ENCODE measurements at regions of chr1 and their contacts with region 1.

Region 1: DNA sequence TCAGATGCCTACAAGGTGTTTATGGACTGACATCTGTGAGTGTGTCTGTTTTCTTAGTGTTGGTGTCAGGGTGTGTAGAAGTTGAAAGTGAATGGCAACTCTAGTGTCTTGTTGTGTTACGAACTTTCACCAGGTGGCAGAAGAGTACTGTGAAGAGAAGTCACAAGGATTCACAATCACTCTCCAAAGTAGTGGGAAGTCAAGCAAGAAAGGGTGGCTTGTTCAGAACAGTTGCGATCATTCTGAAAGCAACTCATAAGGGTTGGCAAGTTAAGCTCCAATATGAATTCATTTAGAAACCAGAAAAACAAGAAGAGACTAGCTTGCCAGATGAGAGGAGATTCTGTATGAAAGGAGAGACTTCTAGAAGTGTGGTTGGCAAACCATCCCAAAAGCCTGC is 86.1 kb downstream of the FASLG start:
- DNase-seq: peak; percentile 91
- H3K4me3 Mint-ChIP-seq: peak overlapping the region; percentile 42
- H3K27ac Mint-ChIP-seq: peak overlapping the region; percentile 86
- H3K4me1 Mint-ChIP-seq: peaks cover 42% of the 10 kb centered on the region
- H3K27me3 Mint-ChIP-seq: no peaks in the 10 kb centered on the region
- CTCF ChIP-seq: peak; percentile 85

Region 2: GRCh38 chr1:172778456-172779455 is 33.7 kb after region 1 on chr1:
- CTCF ChIA-PET with region 1: interaction called, 13 read pairs
- POLR2A ChIA-PET with region 1: interaction called, 4 read pairs
- intact Hi-C with region 1: no loop called
- DNase-seq: peak; percentile 14
- H3K4me3 Mint-ChIP-seq: no peak overlapping the region
- H3K27ac Mint-ChIP-seq: no peak overlapping the region
- H3K4me1 Mint-ChIP-seq: no peaks in the 10 kb centered on the region
- H3K27me3 Mint-ChIP-seq: no peaks in the 10 kb centered on the region
- CTCF ChIP-seq: peak; percentile 10

Region 3: GRCh38 chr1:172976222-172977041 is 231.4 kb after region 1 on chr1:
- CTCF ChIA-PET with region 1: interaction called, 9 read pairs
- POLR2A ChIA-PET with region 1: interaction called, 4 read pairs
- intact Hi-C with region 1: loop called (anchors 1 kb)
- DNase-seq: peak; percentile 98
- H3K4me3 Mint-ChIP-seq: no peak overlapping the region
- H3K27ac Mint-ChIP-seq: peak overlapping the region; percentile 88
- H3K4me1 Mint-ChIP-seq: peaks cover 47% of the 10 kb centered on the region
- H3K27me3 Mint-ChIP-seq: no peaks in the 10 kb centered on the region
- CTCF ChIP-seq: no peak

Region 4: GRCh38 chr1:172990598-172991215 is 245.7 kb after region 1 on chr1:
- CTCF ChIA-PET with region 1: no interaction called
- POLR2A ChIA-PET with region 1: no interaction called
- intact Hi-C with region 1: no loop called
- DNase-seq: no peak
- H3K4me3 Mint-ChIP-seq: no peak overlapping the region
- H3K27ac Mint-ChIP-seq: no peak overlapping the region
- H3K4me1 Mint-ChIP-seq: peaks cover 10% of the 10 kb centered on the region
- H3K27me3 Mint-ChIP-seq: no peaks in the 10 kb centered on the region
- CTCF ChIP-seq: no peak

Region 5: DNA sequence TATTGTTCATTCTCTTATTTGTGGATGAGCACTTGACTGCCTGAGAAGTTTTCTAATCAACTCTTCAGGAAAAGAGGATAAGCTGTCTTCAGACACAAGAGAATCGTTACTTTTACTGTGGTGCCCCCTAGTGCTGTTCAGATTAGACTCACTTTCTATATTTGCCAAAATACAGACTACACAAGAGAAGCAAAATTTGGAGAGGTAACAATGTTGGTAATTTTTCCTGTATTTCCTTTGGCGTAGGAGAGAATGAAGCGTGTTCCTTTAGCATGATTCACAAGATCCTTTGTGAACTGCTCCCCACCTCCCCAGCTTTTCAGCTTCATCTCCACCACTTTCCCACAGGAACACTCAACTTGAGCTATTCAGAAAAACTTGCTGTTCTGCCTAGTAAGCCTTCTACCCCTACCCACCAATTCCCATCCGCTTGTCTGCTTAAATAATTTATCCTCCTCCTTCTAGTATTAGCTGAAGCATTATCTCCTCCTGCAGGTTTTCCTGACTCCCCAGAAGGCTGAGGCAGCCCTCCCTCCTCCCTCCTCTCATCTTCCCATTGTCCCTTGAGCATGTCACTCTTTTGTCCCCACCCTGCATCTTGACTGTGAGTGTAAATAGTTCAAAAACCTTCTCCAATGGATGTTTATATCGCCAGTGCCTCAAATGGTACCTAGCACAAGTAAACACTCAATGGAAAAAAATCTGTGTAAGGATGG is 457.6 kb after region 1 on chr1:
- CTCF ChIA-PET with region 1: interaction called, 590 read pairs
- POLR2A ChIA-PET with region 1: interaction called, 35 read pairs
- intact Hi-C with region 1: loop called (anchors 1 kb)
- DNase-seq: peak; percentile 83
- H3K4me3 Mint-ChIP-seq: no peak overlapping the region
- H3K27ac Mint-ChIP-seq: no peak overlapping the region
- H3K4me1 Mint-ChIP-seq: peaks cover 25% of the 10 kb centered on the region
- H3K27me3 Mint-ChIP-seq: no peaks in the 10 kb centered on the region
- CTCF ChIP-seq: peak; percentile 92

Region 6: DNA sequence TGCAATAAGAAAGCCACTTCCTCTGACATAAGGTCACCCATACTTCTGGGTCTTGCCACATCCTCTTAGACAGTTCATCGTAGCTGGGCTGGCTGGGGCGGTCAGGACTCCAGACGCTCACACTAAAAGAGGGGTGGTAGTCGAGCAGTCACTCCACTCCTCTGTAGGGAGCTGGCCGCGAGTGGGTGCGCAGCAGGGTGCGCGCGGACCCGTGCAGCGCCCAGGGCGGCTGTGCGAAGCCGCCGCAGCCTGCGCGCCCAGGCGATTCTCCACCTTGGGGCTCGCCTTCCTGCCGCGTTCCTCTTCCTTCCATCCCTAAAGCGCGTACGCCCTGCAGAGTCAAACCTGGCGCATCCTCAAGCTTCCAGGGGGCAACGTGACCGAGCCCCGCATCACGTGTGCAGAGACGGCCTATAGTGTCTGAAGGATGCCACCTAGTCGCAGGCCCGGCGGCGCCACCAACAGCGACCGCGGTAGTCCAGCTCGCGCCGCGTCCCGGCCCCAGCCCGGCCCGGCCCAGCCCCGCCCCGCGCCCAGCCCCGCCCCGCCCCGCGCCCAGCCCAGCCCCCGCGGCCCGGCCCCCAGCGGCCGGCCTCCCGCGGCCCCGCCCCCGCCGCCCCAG is 731.8 kb after region 1 on chr1:
- CTCF ChIA-PET with region 1: interaction called, 6 read pairs
- POLR2A ChIA-PET with region 1: interaction called, 3 read pairs
- intact Hi-C with region 1: loop called (anchors 2 kb)
- DNase-seq: peak; percentile 95
- H3K4me3 Mint-ChIP-seq: peak overlapping the region; percentile 97
- H3K27ac Mint-ChIP-seq: peak overlapping the region; percentile 99
- H3K4me1 Mint-ChIP-seq: peaks cover 62% of the 10 kb centered on the region
- H3K27me3 Mint-ChIP-seq: no peaks in the 10 kb centered on the region
- CTCF ChIP-seq: no peak

Region 7: DNA sequence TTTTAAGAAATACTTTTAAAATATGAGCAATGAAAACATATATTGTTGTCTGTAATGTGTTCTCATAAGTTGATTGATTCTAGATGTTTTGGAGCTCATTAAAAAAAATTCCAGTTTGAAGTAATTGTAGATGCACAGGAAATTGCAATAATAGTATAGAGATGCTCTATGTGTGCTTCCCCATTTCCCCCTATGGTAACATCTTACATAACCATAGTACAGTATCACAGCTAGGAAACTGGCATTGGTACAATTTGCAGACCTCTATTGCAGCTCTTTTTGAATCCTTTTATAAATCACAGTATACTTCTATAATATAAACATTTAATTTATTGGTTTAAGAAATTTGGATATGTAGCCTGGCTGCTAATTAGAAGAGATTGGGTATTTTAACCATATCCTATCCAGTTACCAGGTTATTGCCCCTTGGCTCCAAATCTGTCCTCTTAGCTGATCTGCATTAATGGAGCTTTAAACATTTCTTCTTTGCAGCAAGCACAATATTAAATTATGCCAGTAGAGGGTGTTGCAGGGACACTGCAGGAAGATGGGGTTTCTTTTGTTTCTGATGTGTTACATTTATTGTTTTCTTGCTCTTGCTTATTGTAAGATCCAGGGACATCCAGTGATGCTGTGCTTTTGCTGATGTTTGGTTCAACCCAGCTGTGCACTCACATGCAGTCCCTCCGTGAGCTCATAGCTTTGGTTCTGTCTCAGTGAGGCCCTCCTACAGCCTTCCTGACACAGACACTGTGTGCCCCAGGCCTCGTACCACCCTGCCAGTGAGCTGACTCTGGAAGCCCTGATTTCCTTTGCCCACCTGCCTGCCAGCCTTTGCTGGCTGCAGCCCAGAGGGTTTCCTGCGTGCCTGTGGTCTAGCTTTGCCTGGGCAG is 1517.6 kb after region 1 on chr1:
- CTCF ChIA-PET with region 1: interaction called, 9 read pairs
- POLR2A ChIA-PET with region 1: no interaction called
- intact Hi-C with region 1: loop called (anchors 5 kb)
- DNase-seq: peak; percentile 59
- H3K4me3 Mint-ChIP-seq: no peak overlapping the region
- H3K27ac Mint-ChIP-seq: no peak overlapping the region
- H3K4me1 Mint-ChIP-seq: no peaks in the 10 kb centered on the region
- H3K27me3 Mint-ChIP-seq: no peaks in the 10 kb centered on the region
- CTCF ChIP-seq: peak; percentile 90